ENCODE measurements at regions of chr6 and their contacts with region 1.

Region 1: DNA sequence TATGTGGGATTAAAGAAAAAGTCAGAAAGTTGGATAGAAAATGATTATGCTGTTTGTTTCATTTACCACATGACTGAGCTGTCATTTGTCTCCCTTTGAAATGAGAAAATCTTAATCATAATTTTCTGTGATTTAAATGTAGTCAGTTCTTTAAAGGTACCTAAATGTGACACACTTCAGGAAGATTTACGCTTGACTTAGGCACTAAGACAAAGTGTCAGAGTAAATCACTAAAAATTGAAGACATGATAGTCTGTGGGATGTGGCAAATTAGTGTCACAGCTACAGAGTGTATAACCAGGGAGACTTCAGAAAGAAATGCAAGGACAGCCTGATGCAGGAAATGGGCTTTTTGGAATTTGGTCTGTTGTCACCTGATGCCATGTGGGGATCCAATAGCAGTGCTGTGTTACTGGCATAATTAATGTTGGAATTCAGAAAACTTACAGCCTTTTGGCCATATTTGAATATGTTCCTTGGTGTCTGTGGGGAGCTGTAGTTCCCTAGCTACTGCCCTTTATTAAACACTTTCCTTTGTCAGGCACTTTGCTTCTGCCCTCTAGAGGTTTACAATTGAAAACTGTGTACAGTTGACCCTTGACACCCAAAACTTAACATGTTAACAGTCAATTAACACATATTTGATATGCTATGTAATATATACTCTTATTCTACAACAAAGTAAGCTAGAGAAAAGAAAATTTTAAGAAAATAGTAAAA is 493.8 kb downstream of the UTRN start:
- DNase-seq: no peak
- H3K4me3 Mint-ChIP-seq: no peak overlapping the region
- H3K27ac Mint-ChIP-seq: no peak overlapping the region
- H3K4me1 Mint-ChIP-seq: no peaks in the 10 kb centered on the region
- H3K27me3 Mint-ChIP-seq: no peaks in the 10 kb centered on the region

Region 2: DNA sequence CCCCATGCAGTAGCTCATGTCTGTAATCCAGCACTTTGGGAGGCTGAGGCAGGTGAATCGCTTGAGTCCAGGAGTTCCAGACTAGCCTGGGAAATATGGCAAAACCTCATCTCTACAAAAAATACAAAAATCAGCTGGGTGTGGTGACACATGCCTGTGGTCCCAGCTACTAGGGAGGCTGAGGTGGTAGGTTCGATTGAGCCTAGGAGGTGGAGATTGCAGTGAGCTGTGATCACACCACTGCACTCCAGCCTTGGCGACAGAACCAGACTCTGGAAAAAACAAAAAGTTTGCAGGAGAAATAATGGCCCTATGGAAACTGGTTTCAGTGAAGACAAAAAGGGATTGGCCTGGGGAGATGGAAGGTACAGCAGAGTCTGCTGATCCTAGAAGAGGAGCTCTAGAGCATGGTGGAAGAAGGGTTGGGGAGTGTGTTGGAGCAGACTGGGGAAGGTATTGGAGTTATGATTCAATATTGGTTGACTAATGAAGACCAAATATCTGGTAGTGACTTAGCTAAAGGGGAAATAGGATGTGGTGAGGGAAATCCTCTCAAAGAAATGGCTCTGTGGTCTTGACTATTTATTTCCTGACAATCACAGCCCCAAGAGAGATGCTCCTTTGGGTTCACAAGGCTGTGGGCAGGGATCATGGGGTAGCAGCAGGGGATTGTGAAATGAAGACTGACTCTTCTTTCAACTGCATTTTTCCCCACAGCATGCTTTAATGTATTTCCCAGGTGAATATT is 211.9 kb before region 1 on chr6:
- CTCF ChIA-PET with region 1: no interaction called
- POLR2A ChIA-PET with region 1: interaction called, 16 read pairs
- DNase-seq: peak; percentile 12
- H3K4me3 Mint-ChIP-seq: no peak overlapping the region
- H3K27ac Mint-ChIP-seq: no peak overlapping the region
- H3K4me1 Mint-ChIP-seq: peaks cover 6% of the 10 kb centered on the region
- H3K27me3 Mint-ChIP-seq: no peaks in the 10 kb centered on the region

Measured in activated CD4-positive, alpha-beta T cell treated with anti-CD3 and anti-CD28 coated beads, Interleukin-2, amount 10 ng/mL, durations not matched to agents 7 days and 5 days (primary cell).